ENCODE measurements at regions of chr14 and their contacts with region 1.

Region 1: GRCh38 chr14:49585803-49586672 is at the start of gene RPS29:
- H3K4me3 Mint-ChIP-seq: peak within 1 kb of the TSS; percentile 93
- H3K27ac Mint-ChIP-seq: peak within 1 kb of the TSS; percentile 98
- H3K4me1 Mint-ChIP-seq: peaks cover 34% of the 10 kb centered on the region
- H3K27me3 Mint-ChIP-seq: no peaks in the 10 kb centered on the region

Region 2: DNA sequence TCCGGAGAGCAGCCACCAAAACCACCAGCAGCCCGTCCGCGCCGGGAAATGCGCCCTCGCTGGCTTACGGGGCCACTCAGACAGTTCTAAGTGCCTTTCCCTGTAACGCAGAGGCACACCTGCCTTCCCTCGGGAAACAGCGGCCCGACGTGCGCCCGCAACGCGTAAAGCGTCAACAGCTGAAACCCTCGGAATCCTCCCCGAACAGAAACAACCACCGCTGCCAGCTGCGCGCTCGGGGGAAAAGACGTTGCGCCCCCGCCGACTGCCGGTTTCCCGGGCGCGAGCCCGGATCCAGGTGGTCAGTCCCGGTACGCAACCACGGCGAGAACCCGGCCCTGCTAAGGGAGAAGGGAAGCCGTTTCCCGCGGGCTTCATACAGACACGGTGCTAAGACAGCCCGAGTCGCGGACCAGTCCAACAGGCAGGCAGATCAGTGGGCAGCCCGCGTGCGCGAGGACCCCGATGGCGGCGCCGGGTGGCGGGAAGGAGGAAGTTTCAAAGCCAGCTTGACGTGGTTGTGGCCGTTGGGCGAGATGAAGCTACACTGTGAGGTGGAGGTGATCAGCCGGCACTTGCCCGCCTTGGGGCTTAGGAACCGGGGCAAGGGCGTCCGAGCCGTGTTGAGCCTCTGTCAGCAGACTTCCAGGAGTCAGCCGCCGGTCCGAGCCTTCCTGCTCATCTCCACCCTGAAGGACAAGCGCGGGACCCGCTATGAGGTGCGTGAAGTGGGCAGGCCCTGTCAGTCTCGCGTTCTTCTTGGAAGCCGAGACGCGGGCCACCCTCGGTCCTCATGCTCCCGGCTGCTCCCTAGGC is 12.7 kb after region 1 on chr14 and contains the start of gene LRR1:
- intact Hi-C with region 1: loop called (anchors 1 kb)
- H3K4me3 Mint-ChIP-seq: peak within 1 kb of the TSS; percentile 88
- H3K27ac Mint-ChIP-seq: peak within 1 kb of the TSS; percentile 98
- H3K4me1 Mint-ChIP-seq: peaks cover 25% of the 10 kb centered on the region
- H3K27me3 Mint-ChIP-seq: no peaks in the 10 kb centered on the region

Region 3: GRCh38 chr14:49767562-49768300 is 181.7 kb after region 1 on chr14 and contains the start of gene KLHDC2:
- intact Hi-C with region 1: loop called (anchors 5 kb)
- H3K4me3 Mint-ChIP-seq: peak within 1 kb of the TSS; percentile 89
- H3K27ac Mint-ChIP-seq: peak within 1 kb of the TSS; percentile 95
- H3K4me1 Mint-ChIP-seq: peaks cover 33% of the 10 kb centered on the region
- H3K27me3 Mint-ChIP-seq: no peaks in the 10 kb centered on the region

Region 4: GRCh38 chr14:49999216-49999761 is 413.3 kb after region 1 on chr14:
- intact Hi-C with region 1: no loop called
- H3K4me3 Mint-ChIP-seq: peak overlapping the region; percentile 61
- H3K27ac Mint-ChIP-seq: peak overlapping the region; percentile 98
- H3K4me1 Mint-ChIP-seq: peaks cover 66% of the 10 kb centered on the region
- H3K27me3 Mint-ChIP-seq: no peaks in the 10 kb centered on the region

Region 5: GRCh38 chr14:50371546-50371945 is 785.5 kb after region 1 on chr14:
- intact Hi-C with region 1: no loop called
- H3K4me3 Mint-ChIP-seq: no peak overlapping the region
- H3K27ac Mint-ChIP-seq: no peak overlapping the region
- H3K4me1 Mint-ChIP-seq: peaks cover 7% of the 10 kb centered on the region
- H3K27me3 Mint-ChIP-seq: peaks cover 2% of the 10 kb centered on the region

Region 6: DNA sequence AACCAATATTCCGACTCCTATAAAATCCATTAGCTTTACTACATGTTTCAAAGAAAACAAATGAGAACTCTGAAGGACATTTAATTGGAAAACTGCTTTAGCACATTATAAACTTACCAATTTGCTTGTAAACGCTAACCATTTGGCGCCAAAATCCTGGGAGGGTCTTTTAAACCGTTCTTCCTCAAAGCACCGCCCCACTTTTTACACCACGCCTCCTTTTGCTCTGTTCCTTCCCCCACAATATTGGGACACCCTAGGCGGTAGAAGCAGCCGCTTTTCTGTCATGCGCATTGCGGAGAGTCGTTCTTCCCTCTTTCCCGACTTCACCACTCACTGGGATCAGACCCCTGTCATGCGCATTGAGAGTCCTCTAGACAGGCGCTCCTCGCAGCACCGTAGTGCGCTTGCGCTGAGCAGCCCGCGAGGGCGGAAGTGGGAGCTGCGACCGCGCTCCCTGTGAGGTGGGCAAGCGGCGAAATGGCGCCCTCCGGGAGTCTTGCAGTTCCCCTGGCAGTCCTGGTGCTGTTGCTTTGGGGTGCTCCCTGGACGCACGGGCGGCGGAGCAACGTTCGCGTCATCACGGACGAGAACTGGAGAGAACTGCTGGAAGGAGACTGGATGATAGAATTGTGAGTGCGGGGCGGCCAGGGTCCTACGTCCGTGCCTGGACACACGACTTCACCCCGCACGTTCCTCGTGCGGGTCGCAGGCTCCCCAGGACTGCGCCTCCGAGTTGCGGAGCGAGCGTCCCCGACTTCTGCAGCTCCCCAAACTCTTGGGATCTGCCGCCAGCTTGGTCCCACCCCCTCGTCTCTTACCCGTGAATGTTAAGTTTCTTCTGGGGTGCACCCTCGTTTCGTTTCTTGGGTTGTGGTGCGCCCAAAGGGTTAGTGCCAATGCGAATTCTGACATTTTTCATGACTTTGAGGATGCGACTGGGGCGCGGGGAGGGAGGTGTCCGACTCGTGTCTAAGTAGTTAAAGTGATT is 1654.1 kb after region 1 on chr14 and contains the start of gene TMX1:
- intact Hi-C with region 1: loop called (anchors 10 kb)
- H3K4me3 Mint-ChIP-seq: no peak within 1 kb of the TSS
- H3K27ac Mint-ChIP-seq: no peak within 1 kb of the TSS
- H3K4me1 Mint-ChIP-seq: peaks cover 18% of the 10 kb centered on the region
- H3K27me3 Mint-ChIP-seq: no peaks in the 10 kb centered on the region

Measured in dendritic cell treated with granulocyte-macrophage colony-stimulating factor and Interleukin-4, amounts not matched to agents 40 ng/mL and 50 ng/mL, for 4 days (primary cell).